Astrocyte of the cerebellum (primary cell): ENCODE measurements at regions of chr20 and their contacts with region 1.

Region 1: DNA sequence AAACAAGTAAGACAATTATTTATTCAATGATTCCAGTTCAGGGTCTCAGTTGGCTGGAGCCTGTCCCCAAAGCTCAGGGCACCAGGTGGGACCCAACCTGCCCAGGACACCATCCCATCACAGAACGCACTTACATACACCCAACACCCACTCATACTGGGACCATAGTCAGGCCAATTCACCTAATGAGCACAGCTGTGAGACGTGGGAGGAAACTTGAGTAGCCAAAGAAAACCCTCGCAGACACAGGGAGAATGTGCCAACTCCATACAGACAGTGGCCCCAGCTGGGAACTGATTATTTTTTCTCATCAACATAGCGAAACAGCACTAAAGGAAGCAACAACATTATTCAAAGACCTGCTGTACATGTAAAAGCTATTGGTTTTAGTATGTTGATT is 58.6 kb upstream of the DOK5 start:
- DNase-seq: no peak
- H3K4me3 ChIP-seq: no peak overlapping the region
- CTCF ChIP-seq: no peak

Region 2: GRCh38 chr20:53706466-53707370 is 710.1 kb before region 1 on chr20:
- in situ Hi-C with region 1: no loop called
- DNase-seq: no peak
- H3K4me3 ChIP-seq: no peak overlapping the region
- CTCF ChIP-seq: no peak

Region 3: GRCh38 chr20:54231036-54231435 is 185.7 kb before region 1 on chr20:
- in situ Hi-C with region 1: no loop called
- DNase-seq: no peak
- H3K4me3 ChIP-seq: no peak overlapping the region
- CTCF ChIP-seq: no peak

Region 4: DNA sequence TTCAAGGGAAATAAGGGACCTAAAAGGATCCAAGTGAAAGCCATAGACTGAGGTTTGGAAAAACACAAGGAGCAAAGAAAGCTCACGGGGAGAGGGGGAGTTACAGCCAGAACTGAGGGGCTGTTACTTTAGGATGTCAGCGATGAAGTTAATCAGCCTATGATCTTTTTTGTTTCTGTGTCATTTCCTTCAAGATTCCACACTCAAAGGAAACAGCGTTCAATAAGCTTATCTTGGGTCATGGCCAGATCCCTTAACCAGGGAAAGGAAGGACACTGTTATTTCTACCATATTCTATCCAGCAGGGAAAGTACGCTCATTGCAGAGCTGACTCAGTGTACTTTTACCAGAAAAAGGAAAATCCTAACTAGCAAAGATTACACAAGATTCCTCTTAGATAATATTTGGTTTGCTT is 76.1 kb before region 1 on chr20:
- in situ Hi-C with region 1: loop called (anchors 5 kb)
- DNase-seq: peak; percentile 60
- H3K4me3 ChIP-seq: no peak overlapping the region
- CTCF ChIP-seq: no peak

Region 5: DNA sequence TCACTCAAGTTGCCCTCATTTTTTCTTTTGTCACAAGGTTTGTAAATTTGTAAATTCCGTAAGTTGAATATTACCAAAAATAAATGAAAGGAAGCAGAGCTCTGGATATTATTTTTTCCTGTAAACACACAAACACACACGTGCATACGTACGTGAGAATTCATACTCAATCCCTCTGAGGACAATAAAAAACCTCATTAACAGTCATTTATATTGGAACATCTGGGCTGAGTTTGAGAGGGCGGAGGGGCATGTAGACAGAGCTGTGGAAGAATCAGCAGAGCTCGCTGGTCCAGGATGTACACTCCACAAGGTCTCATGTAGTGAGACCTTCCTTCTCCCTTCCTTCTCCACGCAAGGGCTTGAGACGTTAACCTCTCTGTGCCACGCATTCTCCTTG is 34.4 kb after region 1 on chr20:
- in situ Hi-C with region 1: no loop called
- DNase-seq: no peak
- H3K4me3 ChIP-seq: no peak overlapping the region
- CTCF ChIP-seq: no peak